ENCODE measurements at regions of chr17 and their contacts with region 1.

Region 1: GRCh38 chr17:48586355-48587258 is 3.4 kb downstream of the HOXB3 start:
- DNase-seq: no peak
- ATAC-seq: peak; percentile 59
- H3K4me3 ChIP-seq: peak overlapping the region; percentile 64
- H3K27ac ChIP-seq: no peak overlapping the region
- H3K4me1 ChIP-seq: peaks cover 3% of the 10 kb centered on the region
- H3K27me3 ChIP-seq: peaks cover 0 to 4% of the 10 kb centered on the region in 2 experiments; a peak in 1 of 4 replicates
- CTCF ChIP-seq: no peak
- EP300 ChIP-seq: no peak
- POLR2A ChIP-seq: no peak
- RAD21 ChIP-seq: no peak

Region 2: DNA sequence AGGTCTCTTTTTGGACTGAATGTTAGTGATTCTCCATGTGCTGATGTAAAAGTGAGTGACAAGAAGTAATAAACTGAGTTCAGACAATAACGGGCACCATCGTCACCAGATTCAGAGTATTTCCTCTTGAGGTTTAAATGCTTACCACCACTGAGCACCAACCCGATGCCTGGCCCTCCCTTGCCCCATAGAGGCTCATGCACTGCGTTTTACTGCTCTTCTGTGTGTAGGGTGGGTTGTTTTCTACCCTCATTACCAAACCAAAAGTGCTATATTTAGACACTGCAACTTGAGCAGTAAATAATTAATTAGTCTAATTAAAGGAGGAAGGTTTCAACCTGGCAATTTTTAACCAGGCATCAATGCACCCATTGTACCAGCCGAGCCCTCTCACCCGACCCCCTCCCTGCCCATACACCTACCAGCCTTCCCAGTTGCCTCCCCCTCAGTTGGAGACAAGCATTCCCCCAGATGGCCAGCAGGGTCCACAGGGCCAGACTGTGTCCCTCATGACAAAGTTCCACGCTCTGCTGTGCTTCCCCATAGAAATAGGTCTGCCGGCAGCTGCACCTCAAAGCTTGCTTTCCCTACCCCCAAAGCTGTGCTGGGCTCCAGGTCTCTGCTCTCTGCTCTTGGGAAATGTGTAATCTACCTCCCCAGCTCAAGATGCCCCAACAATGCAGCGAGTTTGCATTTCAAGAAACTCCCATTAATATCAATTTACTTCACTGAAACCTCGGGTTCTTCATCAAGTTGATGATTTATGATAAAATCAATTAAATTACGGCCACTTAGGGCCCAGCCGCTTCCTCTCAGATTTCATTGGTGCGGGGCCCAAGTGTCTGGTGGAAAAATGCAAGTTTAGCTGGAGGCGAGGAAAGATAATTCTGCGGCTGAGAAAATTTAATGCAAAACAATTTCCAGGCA is 24.5 kb before region 1 on chr17:
- CTCF ChIA-PET with region 1: interaction called, 9 read pairs
- POLR2A ChIA-PET with region 1: no interaction called
- RAD21 ChIA-PET with region 1: interaction called, 3 read pairs
- SMC1A ChIA-PET with region 1: interaction called, 11 read pairs
- in situ Hi-C with region 1: no loop called
- intact Hi-C with region 1: no loop called
- DNase-seq: peak; percentile 65
- ATAC-seq: peak; percentile 94
- H3K4me3 ChIP-seq: no peak overlapping the region
- H3K27ac ChIP-seq: no peak overlapping the region
- H3K4me1 ChIP-seq: no peaks in the 10 kb centered on the region
- H3K27me3 ChIP-seq: no peaks in the 10 kb centered on the region
- CTCF ChIP-seq: peak in 2 of 3 experiments; percentile 19 to 51; a peak in 2 of 6 replicates
- EP300 ChIP-seq: peak; percentile 23 to 42; a peak in 1 of 4 replicates
- POLR2A ChIP-seq: no peak
- RAD21 ChIP-seq: no peak

Measured in GM12878 (cell line).